Natural killer cell (primary cell): ENCODE measurements at regions of chr1 and their contacts with region 1.

Region 1: DNA sequence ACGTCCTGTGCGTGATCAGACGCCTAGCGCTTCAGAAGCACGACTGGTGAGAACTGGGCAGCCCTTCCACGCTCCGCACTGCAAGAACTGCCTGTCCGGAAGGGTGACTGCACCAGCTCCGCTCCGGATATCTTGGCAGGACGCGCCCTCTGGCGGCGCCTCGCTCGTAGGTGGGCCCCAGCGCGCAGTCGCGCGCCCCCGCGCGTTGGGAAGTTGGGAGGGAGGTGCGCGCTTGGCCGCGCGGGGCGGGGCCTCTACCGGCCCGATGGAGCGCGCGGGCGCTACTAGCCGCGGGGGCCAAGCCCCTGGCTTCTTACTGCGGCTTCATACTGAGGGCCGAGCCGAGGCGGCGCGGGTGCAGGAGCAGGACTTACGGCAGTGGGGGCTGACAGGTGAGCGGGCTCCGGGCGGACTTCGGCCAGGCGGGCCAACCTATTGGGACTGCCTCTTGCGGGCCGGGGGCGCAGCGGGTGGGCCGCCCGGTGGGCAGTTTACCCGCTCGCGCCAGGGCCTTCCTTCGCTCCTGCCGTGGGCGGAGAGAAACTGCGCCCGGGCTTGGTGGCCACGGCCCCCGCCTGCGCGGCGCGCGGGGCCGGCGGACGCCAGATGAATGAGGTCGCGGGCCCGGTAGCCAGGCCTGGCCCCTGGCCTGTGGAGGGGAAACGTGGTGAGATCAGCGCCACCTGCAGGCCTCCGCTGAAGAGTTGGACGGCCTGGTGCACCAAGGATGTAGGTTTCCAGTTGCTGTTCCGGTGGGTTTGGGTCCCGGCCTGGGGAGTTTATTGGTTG is at the start of gene CHD1L:
- DNase-seq: peak; percentile 92 to 97
- ATAC-seq: peak; percentile 92 to 99 (median 93)
- H3K4me3 ChIP-seq: peak within 1 kb of the TSS; percentile 84
- H3K4me3 Mint-ChIP-seq: peak within 1 kb of the TSS; percentile 95
- H3K27ac ChIP-seq: peak within 1 kb of the TSS; percentile 53
- H3K27ac Mint-ChIP-seq: peak within 1 kb of the TSS; percentile 81 to 89
- H3K4me1 ChIP-seq: peaks cover 8% of the 10 kb centered on the region
- H3K4me1 Mint-ChIP-seq: peaks cover 30 to 42% of the 10 kb centered on the region in 2 donors
- H3K27me3 ChIP-seq: no peaks in the 10 kb centered on the region
- H3K27me3 Mint-ChIP-seq: peaks cover 0 to 8% of the 10 kb centered on the region in 2 donors
- CTCF ChIP-seq: peak; percentile 78
- total RNA-seq, gene CHD1L: 35.8 to 45.7 (median 44.0) TPM

Region 2: DNA sequence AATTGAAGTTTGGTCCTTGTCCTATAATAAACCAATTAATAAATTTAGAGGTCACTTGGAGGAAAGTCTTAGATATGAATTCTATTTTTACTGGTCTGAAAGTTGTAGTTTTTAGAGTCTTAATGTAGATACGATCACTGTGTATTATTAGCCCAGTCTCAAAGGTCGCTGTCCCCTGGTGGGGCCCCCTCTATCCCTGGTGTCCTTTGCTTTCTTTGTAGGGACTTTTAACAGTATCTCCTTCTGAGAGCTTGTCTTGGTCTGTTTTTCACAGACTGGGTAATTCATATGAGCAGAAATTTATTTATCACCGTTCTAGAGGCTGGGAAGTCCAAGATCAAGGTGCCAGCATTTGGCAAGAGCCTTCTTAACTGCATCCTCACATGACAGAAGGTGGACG is 18.3 kb after region 1 on chr1:
- intact Hi-C with region 1: no loop called
- DNase-seq: no peak
- ATAC-seq: no peak
- H3K4me3 ChIP-seq: no peak overlapping the region
- H3K4me3 Mint-ChIP-seq: no peak overlapping the region
- H3K27ac ChIP-seq: no peak overlapping the region
- H3K27ac Mint-ChIP-seq: no peak overlapping the region
- H3K4me1 ChIP-seq: no peaks in the 10 kb centered on the region
- H3K4me1 Mint-ChIP-seq: no peaks in the 10 kb centered on the region
- H3K27me3 ChIP-seq: no peaks in the 10 kb centered on the region
- H3K27me3 Mint-ChIP-seq: no peaks in the 10 kb centered on the region
- CTCF ChIP-seq: no peak

Region 3: DNA sequence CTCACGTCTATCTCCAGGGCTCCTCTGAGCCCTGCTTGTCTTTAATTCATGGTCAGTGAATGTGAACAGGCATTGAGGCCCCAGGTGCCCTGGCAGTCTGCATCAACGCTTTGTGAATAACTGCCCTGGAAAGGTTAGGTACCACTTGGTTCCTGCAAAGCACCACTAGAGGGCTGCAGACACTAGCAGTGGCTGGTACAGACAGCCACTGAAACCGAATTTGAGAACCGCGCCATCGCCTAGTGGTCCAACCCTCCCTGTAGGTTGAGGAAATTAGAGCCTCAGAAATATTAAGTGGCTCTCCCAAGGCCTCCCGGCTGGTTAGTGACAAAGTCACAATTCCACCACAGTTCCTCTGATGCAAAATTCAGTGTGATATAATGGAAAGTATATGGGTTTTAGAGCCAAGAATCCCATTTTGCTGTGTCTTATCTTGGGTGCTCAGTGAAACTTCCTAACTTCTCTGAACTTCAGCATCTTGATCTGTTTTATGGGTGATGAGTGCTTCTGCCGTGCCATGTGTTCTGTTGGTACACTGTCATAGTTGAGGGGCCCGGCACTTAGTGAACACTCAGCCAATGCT is 252.5 kb after region 1 on chr1:
- intact Hi-C with region 1: no loop called
- DNase-seq: peak; percentile 48 to 85
- ATAC-seq: peak; percentile 88 to 100 (median 99)
- H3K4me3 ChIP-seq: no peak overlapping the region
- H3K4me3 Mint-ChIP-seq: no peak overlapping the region
- H3K27ac ChIP-seq: no peak overlapping the region
- H3K27ac Mint-ChIP-seq: no peak overlapping the region
- H3K4me1 ChIP-seq: no peaks in the 10 kb centered on the region
- H3K4me1 Mint-ChIP-seq: no peaks in the 10 kb centered on the region
- H3K27me3 ChIP-seq: no peaks in the 10 kb centered on the region
- H3K27me3 Mint-ChIP-seq: peaks cover 11 to 13% of the 10 kb centered on the region in 2 donors
- CTCF ChIP-seq: peak; percentile 87

Region 4: GRCh38 chr1:148259559-148259958 is 1016.9 kb after region 1 on chr1:
- intact Hi-C with region 1: loop called (anchors 10 kb)
- DNase-seq: no peak
- ATAC-seq: no peak
- H3K4me3 ChIP-seq: no peak overlapping the region
- H3K4me3 Mint-ChIP-seq: no peak overlapping the region
- H3K27ac ChIP-seq: no peak overlapping the region
- H3K27ac Mint-ChIP-seq: no peak overlapping the region
- H3K4me1 ChIP-seq: peaks cover 10% of the 10 kb centered on the region
- H3K4me1 Mint-ChIP-seq: peaks cover 19 to 20% of the 10 kb centered on the region in 2 donors
- H3K27me3 ChIP-seq: no peaks in the 10 kb centered on the region
- H3K27me3 Mint-ChIP-seq: peaks cover 26 to 30% of the 10 kb centered on the region in 2 donors
- CTCF ChIP-seq: no peak